CD14-positive monocyte (primary cell): ENCODE measurements at regions of chr1 and their contacts with region 1.

Region 1: GRCh38 chr1:43171876-43172526 is at the starts of genes CFAP57 and EBNA1BP2:
- DNase-seq: peak; percentile 95
- H3K4me3 ChIP-seq: peak within 1 kb of the TSS; percentile 62 to 98 (median 80)
- H3K4me3 Mint-ChIP-seq: peak within 1 kb of the TSS; percentile 94 to 96
- H3K27ac ChIP-seq: peak within 1 kb of the TSS in 1 of 2 donors; percentile 71
- H3K27ac Mint-ChIP-seq: peak within 1 kb of the TSS; percentile 71 to 97 (median 95)
- H3K4me1 ChIP-seq: peaks cover 9 to 16% of the 10 kb centered on the region in 2 donors
- H3K4me1 Mint-ChIP-seq: peaks cover 17% of the 10 kb centered on the region
- H3K27me3 ChIP-seq: peaks cover 0 to 23% of the 10 kb centered on the region in 2 donors
- H3K27me3 Mint-ChIP-seq: peaks cover 5 to 17% (median 13%) of the 10 kb centered on the region in 3 donors
- CTCF ChIP-seq: no peak
- polyA plus RNA-seq, gene CFAP57: 0.01 to 0.05 TPM in 2 of 3 donors, not detected in the other
- polyA plus RNA-seq, gene EBNA1BP2: 10.2 to 37.2 (median 30.9) TPM

Region 2: DNA sequence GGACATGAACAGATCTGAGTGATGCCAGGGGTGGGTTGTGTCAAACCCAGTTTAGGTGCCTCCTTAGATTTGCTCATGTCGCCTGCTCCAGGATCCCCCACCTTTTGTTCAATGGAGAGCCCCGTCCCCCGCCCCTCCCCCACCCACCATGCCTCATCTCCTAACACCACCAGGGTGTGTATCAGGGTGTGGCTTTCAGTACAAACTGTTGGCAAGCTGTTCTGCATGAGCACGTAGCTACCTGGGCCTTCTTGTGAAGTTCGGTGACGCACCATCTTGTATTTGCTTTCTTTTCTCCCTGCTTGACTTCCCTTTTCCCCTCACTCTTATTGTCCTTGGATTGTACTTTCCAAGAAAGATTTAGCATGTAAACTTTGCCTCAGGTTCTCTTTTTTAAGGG is 94.7 kb before region 1 on chr1:
- intact Hi-C with region 1: no loop called
- DNase-seq: no peak
- H3K4me3 ChIP-seq: no peak overlapping the region
- H3K4me3 Mint-ChIP-seq: no peak overlapping the region
- H3K27ac ChIP-seq: no peak overlapping the region
- H3K27ac Mint-ChIP-seq: no peak overlapping the region
- H3K4me1 ChIP-seq: peaks cover 11 to 12% of the 10 kb centered on the region in 2 donors
- H3K4me1 Mint-ChIP-seq: peaks cover 13% of the 10 kb centered on the region
- H3K27me3 ChIP-seq: no peaks in the 10 kb centered on the region
- H3K27me3 Mint-ChIP-seq: peaks cover 0 to 3% (median 2%) of the 10 kb centered on the region in 3 donors
- CTCF ChIP-seq: no peak

Region 3: DNA sequence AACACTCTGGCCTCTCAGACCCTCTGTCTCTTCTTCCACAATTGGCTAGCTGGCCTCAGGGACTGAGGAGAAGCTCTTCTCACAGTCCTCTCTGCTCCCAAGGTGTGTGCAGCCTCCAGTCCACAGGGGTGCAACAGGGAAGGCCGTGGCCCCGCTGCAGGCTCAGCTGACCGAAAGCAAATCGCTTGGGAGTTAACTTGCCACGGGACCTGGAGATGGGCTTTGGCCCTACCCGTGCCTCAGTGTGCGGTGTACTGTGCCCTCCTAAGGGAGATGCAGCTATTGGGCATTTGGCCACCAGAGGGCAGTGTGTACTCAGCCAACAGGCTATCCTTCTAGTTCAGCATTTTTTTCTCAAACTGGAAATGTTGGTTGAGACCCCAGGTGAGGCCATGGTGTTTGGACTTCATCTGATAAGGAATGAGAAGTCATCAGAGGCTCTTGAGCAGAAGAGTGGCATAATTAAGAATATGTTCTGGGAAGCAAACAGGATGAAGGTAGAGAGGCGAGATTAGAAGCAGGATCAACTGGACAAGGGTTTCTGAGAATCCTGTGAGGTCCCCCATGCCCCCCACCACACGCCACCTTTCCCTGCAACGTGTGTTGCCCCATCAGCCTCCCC is 55.3 kb after region 1 on chr1:
- intact Hi-C with region 1: no loop called
- DNase-seq: peak; percentile 50 to 74 (median 69)
- H3K4me3 ChIP-seq: no peak overlapping the region
- H3K4me3 Mint-ChIP-seq: no peak overlapping the region
- H3K27ac ChIP-seq: no peak overlapping the region
- H3K27ac Mint-ChIP-seq: peak overlapping the region in 1 of 7 donors; percentile 36
- H3K4me1 ChIP-seq: no peaks in the 10 kb centered on the region
- H3K4me1 Mint-ChIP-seq: peaks cover 7% of the 10 kb centered on the region
- H3K27me3 ChIP-seq: no peaks in the 10 kb centered on the region
- H3K27me3 Mint-ChIP-seq: peaks cover 0 to 1% (median 1%) of the 10 kb centered on the region in 3 donors
- CTCF ChIP-seq: peak; percentile 94

Region 4: DNA sequence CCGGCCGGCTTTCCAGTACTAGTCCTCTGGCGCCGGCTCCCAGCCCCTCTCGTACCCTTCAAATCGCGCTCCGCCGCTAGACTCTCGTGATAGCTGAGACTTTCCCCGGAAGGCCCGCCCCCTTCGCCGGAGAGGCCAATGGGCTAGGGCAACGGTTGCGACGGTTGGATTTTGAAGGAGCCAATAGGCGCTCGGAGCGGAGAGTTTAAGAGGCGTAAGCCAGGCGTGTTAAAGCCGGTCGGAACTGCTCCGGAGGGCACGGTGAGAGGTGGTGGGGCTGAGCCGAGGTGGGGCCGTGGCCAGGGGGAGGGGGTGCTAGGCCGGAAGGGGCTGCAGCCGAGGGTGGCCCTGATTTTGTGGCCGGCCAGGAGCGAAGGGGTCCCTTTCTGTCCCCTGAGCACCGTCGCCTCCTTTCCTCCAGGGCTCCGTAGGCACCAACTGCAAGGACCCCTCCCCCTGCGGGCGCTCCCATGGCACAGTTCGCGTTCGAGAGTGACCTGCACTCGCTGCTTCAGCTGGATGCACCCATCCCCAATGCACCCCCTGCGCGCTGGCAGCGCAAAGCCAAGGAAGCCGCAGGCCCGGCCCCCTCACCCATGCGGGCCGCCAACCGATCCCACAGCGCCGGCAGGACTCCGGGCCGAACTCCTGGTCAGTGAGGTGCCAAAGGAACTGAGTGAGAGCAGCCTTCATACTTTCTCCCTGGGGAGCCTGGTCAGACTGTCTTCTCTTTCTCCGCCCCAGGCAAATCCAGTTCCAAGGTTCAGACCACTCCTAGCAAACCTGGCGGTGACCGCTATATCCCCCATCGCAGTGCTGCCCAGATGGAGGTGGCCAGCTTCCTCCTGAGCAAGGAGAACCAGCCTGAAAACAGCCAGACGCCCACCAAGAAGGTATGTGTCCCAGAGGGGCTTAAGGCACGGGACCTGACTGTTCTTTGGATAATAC is 187.0 kb after region 1 on chr1 and contains the start of gene CDC20:
- intact Hi-C with region 1: loop called (anchors 2 to 10 kb)
- DNase-seq: peak; percentile 91 to 96 (median 91)
- H3K4me3 ChIP-seq: peak within 1 kb of the TSS; percentile 81 to 88 (median 82)
- H3K4me3 Mint-ChIP-seq: peak within 1 kb of the TSS; percentile 87 to 97
- H3K27ac ChIP-seq: peak within 1 kb of the TSS; percentile 84 to 85
- H3K27ac Mint-ChIP-seq: peak within 1 kb of the TSS; percentile 90 to 98 (median 93)
- H3K4me1 ChIP-seq: peaks cover 49 to 62% of the 10 kb centered on the region in 2 donors
- H3K4me1 Mint-ChIP-seq: peaks cover 58% of the 10 kb centered on the region
- H3K27me3 ChIP-seq: no peaks in the 10 kb centered on the region
- H3K27me3 Mint-ChIP-seq: no peaks in the 10 kb centered on the region
- CTCF ChIP-seq: no peak
- polyA plus RNA-seq, gene CDC20: 0.08 to 0.10 TPM in 2 of 3 donors, not detected in the other

Region 5: DNA sequence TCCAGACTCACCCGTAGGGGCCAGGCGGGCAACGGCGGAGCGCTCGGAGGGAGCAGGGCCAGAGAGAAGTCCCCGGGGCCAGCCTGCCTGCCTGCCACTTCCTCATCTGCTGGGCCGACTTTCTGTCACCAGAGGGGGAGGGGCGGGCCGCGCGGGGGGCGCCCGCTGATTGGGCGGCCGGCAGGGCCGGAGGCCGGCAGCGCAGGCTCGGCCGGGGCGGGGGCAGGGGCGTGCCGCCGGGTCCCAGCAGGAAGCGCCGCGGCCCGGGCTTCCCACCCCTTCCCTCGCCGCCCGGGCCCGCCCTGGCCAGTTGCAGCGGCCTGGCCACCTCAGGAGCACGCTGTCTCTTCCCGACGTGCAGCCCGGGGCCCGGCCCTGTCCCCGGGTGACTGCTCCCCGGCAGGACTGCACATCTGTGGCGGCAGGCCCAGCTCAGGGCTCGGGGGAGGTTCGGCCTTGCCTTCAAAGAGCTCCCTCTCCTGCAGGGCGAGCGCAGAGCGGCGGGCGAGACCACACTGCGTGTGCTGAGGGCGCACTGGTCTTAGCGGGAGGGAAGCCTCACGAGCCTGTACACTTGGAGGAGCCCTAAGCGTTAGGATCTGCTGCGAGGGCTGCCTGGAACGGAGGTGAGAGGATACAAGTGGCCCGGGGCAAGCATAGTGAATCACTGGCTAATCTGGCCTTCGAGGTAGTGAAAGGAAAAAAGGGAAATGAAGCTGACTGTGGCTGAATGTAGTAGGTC is 196.1 kb after region 1 on chr1 and contains the start of gene ELOVL1:
- intact Hi-C with region 1: loop called in 1 of 2 experiments (anchors 10 kb)
- DNase-seq: peak; percentile 89 to 93 (median 90)
- H3K4me3 ChIP-seq: peak within 1 kb of the TSS; percentile 79 to 98 (median 98)
- H3K4me3 Mint-ChIP-seq: peak within 1 kb of the TSS; percentile 86 to 98
- H3K27ac ChIP-seq: peak within 1 kb of the TSS; percentile 81 to 97
- H3K27ac Mint-ChIP-seq: peak within 1 kb of the TSS; percentile 95 to 99 (median 97)
- H3K4me1 ChIP-seq: peaks cover 38 to 63% of the 10 kb centered on the region in 2 donors
- H3K4me1 Mint-ChIP-seq: peaks cover 53% of the 10 kb centered on the region
- H3K27me3 ChIP-seq: no peaks in the 10 kb centered on the region
- H3K27me3 Mint-ChIP-seq: no peaks in the 10 kb centered on the region
- CTCF ChIP-seq: no peak
- polyA plus RNA-seq, gene ELOVL1: 135 to 151 (median 148) TPM